ENCODE measurements at regions of chr2 and their contacts with region 1.

Region 1: GRCh38 chr2:28269019-28269784 is 123.5 kb upstream of the FOSL2 start:
- DNase-seq: peak; percentile 89 to 95
- H3K4me3 ChIP-seq: no peak overlapping the region
- H3K4me3 Mint-ChIP-seq: peak overlapping the region; percentile 72
- H3K27ac Mint-ChIP-seq: peak overlapping the region; percentile 94
- H3K4me1 ChIP-seq: peaks cover 59% of the 10 kb centered on the region
- H3K4me1 Mint-ChIP-seq: peaks cover 60% of the 10 kb centered on the region
- H3K27me3 ChIP-seq: no peaks in the 10 kb centered on the region
- H3K27me3 Mint-ChIP-seq: no peaks in the 10 kb centered on the region
- CTCF ChIP-seq: no peak

Region 2: DNA sequence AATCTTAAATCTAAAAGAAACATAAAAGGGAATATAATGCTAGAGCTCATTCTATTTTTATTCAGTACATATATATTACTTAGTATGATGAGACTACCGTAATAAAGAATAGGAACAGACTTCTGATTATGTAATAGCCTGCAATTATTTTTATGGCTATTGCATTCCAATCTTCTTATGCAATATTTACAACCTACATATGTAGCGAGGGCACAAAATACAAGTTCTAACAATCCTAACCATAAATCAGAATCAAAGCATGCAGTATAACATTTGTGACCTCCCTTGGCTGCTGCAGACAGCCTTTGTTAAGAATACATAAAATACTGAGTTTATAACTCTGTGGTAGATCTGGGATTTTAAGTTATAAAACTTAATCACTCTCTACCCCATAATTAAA is 201.1 kb before region 1 on chr2:
- CTCF ChIA-PET with region 1: no interaction called
- POLR2A ChIA-PET with region 1: no interaction called
- intact Hi-C with region 1: loop called (anchors 2 kb)
- DNase-seq: peak in 1 of 2 experiments; percentile 37
- H3K4me3 ChIP-seq: no peak overlapping the region
- H3K4me3 Mint-ChIP-seq: no peak overlapping the region
- H3K27ac Mint-ChIP-seq: no peak overlapping the region
- H3K4me1 ChIP-seq: peaks cover 19% of the 10 kb centered on the region
- H3K4me1 Mint-ChIP-seq: peaks cover 7% of the 10 kb centered on the region
- H3K27me3 ChIP-seq: no peaks in the 10 kb centered on the region
- H3K27me3 Mint-ChIP-seq: no peaks in the 10 kb centered on the region
- CTCF ChIP-seq: no peak

Region 3: GRCh38 chr2:28155627-28156026 is 113.6 kb before region 1 on chr2:
- CTCF ChIA-PET with region 1: interaction called, 5 read pairs
- POLR2A ChIA-PET with region 1: no interaction called
- intact Hi-C with region 1: loop called (anchors 2 kb)
- DNase-seq: peak in 1 of 2 experiments; percentile 63
- H3K4me3 ChIP-seq: no peak overlapping the region
- H3K4me3 Mint-ChIP-seq: peak overlapping the region; percentile 18
- H3K27ac Mint-ChIP-seq: peak overlapping the region; percentile 87
- H3K4me1 ChIP-seq: peaks cover 28% of the 10 kb centered on the region
- H3K4me1 Mint-ChIP-seq: peaks cover 24% of the 10 kb centered on the region
- H3K27me3 ChIP-seq: no peaks in the 10 kb centered on the region
- H3K27me3 Mint-ChIP-seq: no peaks in the 10 kb centered on the region
- CTCF ChIP-seq: peak; percentile 82 to 84

Region 4: GRCh38 chr2:28250006-28250405 is 19.2 kb before region 1 on chr2:
- CTCF ChIA-PET with region 1: no interaction called
- POLR2A ChIA-PET with region 1: interaction called, 3 read pairs
- intact Hi-C with region 1: loop called (anchors 1 kb)
- DNase-seq: peak; percentile 54 to 83
- H3K4me3 ChIP-seq: no peak overlapping the region
- H3K4me3 Mint-ChIP-seq: no peak overlapping the region
- H3K27ac Mint-ChIP-seq: peak overlapping the region; percentile 52
- H3K4me1 ChIP-seq: peaks cover 11% of the 10 kb centered on the region
- H3K4me1 Mint-ChIP-seq: peaks cover 12% of the 10 kb centered on the region
- H3K27me3 ChIP-seq: no peaks in the 10 kb centered on the region
- H3K27me3 Mint-ChIP-seq: no peaks in the 10 kb centered on the region
- CTCF ChIP-seq: no peak

Measured in Caco-2 (cell line).